BJ (cell line): ENCODE measurements at regions of chr22 and their contacts with region 1.

Region 1: DNA sequence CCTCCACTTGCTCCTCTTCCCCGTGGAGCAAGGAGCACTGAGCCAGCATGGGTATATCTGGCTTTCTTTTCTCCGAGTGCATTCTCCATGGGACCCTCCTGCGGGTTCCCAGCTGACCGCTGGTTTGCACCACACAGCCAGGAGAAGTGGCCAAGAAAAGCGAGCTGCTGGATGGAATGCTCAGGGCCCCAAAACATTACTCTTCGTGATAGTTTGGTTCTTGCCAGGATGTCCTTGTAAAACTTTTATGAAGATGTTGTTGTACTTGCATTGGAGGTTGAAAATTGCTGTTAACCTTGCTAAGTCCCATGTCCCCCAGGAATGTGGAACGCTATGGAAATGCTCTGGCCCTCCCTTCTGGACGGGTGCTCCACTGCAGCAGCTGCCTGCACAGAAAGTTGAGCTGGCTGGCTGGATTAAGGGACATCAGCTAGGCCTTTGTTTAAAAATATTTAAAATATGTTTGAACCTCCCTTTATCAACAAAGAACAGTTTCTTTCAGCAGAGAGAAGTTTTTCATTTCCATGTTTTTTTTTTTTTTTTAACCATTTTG is 68.7 kb downstream of the ZNRF3 start:
- DNase-seq: peak; percentile 65
- H3K4me3 ChIP-seq: no peak overlapping the region
- H3K27me3 ChIP-seq: no peaks in the 10 kb centered on the region
- CTCF ChIP-seq: peak; percentile 52

Region 2: DNA sequence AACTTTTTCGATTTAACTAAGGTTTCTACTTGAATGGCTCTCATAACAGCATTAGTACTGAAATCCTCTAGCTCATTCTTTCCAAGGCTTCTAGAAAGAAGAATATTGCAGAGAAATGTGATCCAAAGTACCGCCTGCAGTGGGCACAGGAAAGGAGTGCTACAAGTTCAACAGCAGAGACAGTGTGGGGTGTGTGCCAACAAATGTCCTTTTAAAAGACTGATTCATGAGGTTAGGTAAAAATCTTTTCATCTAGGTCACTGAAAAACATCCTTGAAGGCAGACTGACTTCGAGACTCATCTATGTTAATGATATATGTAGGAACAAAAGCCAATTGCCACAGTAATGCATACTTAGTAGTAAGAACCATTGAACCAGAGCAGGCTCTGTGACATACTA is 683.9 kb before region 1 on chr22:
- CTCF ChIA-PET with region 1: no interaction called
- POLR2A ChIA-PET with region 1: interaction called, 17 read pairs
- DNase-seq: no peak
- H3K4me3 ChIP-seq: no peak overlapping the region
- H3K27me3 ChIP-seq: no peaks in the 10 kb centered on the region
- CTCF ChIP-seq: no peak

Region 3: DNA sequence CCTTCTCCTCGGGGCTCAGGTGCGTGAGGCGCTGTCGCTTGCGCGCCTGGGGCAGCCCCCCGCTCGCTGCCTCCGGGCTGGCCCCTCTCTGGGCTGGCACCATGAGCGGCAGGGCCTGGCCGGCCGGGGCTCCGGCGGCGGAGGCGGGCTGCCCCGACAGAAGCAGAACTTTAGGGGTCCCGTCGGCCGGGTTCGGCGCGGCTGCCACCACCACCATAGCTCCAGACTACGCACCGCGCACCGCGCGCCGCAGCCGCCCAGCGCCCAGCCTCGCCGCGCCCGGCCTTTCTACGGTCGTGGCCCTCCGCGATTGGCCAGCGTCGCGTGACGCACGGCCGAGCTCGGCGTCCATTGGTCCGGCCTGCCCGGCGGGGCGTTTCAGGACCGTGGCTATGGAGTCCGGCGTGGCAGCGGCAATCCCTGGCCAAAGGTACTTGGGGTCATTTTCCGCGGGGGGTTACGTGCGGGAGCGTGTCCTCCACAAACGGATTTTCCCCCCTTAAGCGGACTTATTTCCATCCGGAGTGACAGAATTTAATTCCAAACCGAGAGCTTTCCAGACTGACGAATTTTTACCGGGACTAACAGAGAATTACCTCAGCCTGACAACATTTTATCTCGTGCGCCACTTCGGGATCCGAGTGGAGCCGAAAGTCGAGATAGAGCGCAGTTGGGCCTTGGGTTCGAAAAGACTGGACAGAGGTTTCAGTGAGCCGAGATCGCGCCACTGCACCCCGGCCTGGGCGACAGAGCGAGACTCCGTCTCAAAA is 151.6 kb before region 1 on chr22 and contains the start of gene XBP1:
- CTCF ChIA-PET with region 1: no interaction called
- POLR2A ChIA-PET with region 1: no interaction called
- DNase-seq: peak; percentile 53
- H3K4me3 ChIP-seq: peak within 1 kb of the TSS; percentile 98
- H3K27me3 ChIP-seq: no peaks in the 10 kb centered on the region
- CTCF ChIP-seq: no peak
- polyA plus RNA-seq, gene XBP1: 223 and 252 TPM in 2 replicates

Region 4: GRCh38 chr22:28817919-28818909 is 133.8 kb before region 1 on chr22:
- CTCF ChIA-PET with region 1: no interaction called
- POLR2A ChIA-PET with region 1: no interaction called
- DNase-seq: no peak
- H3K4me3 ChIP-seq: no peak overlapping the region
- H3K27me3 ChIP-seq: no peaks in the 10 kb centered on the region
- CTCF ChIP-seq: no peak

Region 5: GRCh38 chr22:28855355-28856094 is 96.5 kb before region 1 on chr22:
- CTCF ChIA-PET with region 1: interaction called, 11 read pairs
- POLR2A ChIA-PET with region 1: no interaction called
- DNase-seq: peak; percentile 22
- H3K4me3 ChIP-seq: no peak overlapping the region
- H3K27me3 ChIP-seq: peaks cover 2% of the 10 kb centered on the region; the same call in 1 of the 2 replicates
- CTCF ChIP-seq: peak; percentile 84